Calu3 (cell line): ENCODE measurements at regions of chr2 and their contacts with region 1.

Region 1: GRCh38 chr2:158395166-158395565 is 61.4 kb downstream of the CCDC148 start:
- DNase-seq: peak; percentile 50
- H3K4me3 Mint-ChIP-seq: peak overlapping the region; percentile 20
- H3K27ac Mint-ChIP-seq: peak overlapping the region; percentile 88
- H3K4me1 Mint-ChIP-seq: peaks cover 41% of the 10 kb centered on the region
- H3K27me3 Mint-ChIP-seq: no peaks in the 10 kb centered on the region
- CTCF ChIP-seq: no peak

Region 2: DNA sequence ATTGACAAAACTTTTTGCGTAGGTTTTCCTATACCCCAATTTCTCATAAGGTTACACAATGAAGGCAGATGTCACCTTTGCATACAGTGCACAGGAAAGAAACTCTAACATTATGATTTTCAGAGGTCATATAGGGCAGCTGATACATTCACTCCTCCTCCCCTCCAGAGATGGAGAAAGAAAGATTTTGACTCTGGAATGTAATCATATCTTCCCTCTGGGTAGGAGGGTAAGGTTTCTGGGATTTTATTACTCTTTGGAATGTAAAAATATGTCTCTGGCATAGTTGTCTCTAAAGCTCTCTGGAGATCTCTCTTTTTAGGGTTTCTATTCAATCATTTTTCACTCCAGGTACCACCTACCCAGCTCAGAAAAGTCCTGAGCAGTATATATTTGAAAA is 1560.7 kb before region 1 on chr2:
- CTCF ChIA-PET with region 1: no interaction called
- intact Hi-C with region 1: no loop called
- DNase-seq: no peak
- H3K4me3 Mint-ChIP-seq: no peak overlapping the region
- H3K27ac Mint-ChIP-seq: no peak overlapping the region
- H3K4me1 Mint-ChIP-seq: no peaks in the 10 kb centered on the region
- H3K27me3 Mint-ChIP-seq: no peaks in the 10 kb centered on the region
- CTCF ChIP-seq: no peak

Region 3: DNA sequence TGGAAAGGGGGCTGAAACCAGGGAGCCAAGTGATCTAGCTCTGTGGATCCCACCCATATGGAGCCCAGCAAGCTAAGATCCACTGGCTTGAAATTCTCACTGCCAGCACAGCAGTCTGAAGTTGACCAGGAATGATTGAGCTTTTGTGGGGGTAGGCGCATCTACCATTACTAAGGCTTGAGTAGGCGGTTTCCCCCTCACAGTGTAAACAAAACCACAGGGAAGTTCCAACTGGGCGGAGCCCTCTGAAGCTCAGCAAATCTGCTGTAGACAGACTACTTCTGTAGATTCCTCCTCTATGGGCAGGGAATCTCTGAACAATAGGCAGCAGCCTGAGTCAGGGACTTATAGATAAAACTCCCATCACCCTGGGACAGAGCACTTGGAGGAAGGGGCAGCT is 35.3 kb before region 1 on chr2:
- CTCF ChIA-PET with region 1: interaction called, 3 read pairs
- intact Hi-C with region 1: loop called (anchors 2 kb)
- DNase-seq: peak; percentile 61
- H3K4me3 Mint-ChIP-seq: no peak overlapping the region
- H3K27ac Mint-ChIP-seq: peak overlapping the region; percentile 71
- H3K4me1 Mint-ChIP-seq: peaks cover 18% of the 10 kb centered on the region
- H3K27me3 Mint-ChIP-seq: no peaks in the 10 kb centered on the region
- CTCF ChIP-seq: no peak